ENCODE measurements at regions of chr11 and their contacts with region 1.

Region 1: GRCh38 chr11:5671841-5672240 is 13.0 kb downstream of the TRIM5 start:
- DNase-seq: no peak
- ATAC-seq: no peak
- H3K4me3 ChIP-seq: no peak overlapping the region
- H3K4me3 Mint-ChIP-seq: no peak overlapping the region
- H3K27ac ChIP-seq: no peak overlapping the region
- H3K27ac Mint-ChIP-seq: peak overlapping the region in 1 of 9 donors; percentile 76
- H3K4me1 ChIP-seq: no peaks in the 10 kb centered on the region
- H3K4me1 Mint-ChIP-seq: peaks cover 0 to 29% (median 18%) of the 10 kb centered on the region in 7 donors
- H3K27me3 ChIP-seq: no peaks in the 10 kb centered on the region
- H3K27me3 Mint-ChIP-seq: no peaks in the 10 kb centered on the region

Region 2: GRCh38 chr11:5712507-5712906 is 40.7 kb after region 1 on chr11:
- CTCF ChIA-PET with region 1: interaction called, 3 read pairs
- POLR2A ChIA-PET with region 1: no interaction called
- intact Hi-C with region 1: loop called in 1 of 2 experiments (anchors 5 kb)
- DNase-seq: peak in 3 of 9 donors; percentile 8 to 33 (median 22)
- ATAC-seq: peak; percentile 42
- H3K4me3 ChIP-seq: no peak overlapping the region
- H3K4me3 Mint-ChIP-seq: no peak overlapping the region
- H3K27ac ChIP-seq: no peak overlapping the region
- H3K27ac Mint-ChIP-seq: peak overlapping the region in 7 of 9 donors; percentile 6 to 83 (median 19)
- H3K4me1 ChIP-seq: no peaks in the 10 kb centered on the region
- H3K4me1 Mint-ChIP-seq: peaks cover 0 to 13% (median 4%) of the 10 kb centered on the region in 7 donors
- H3K27me3 ChIP-seq: no peaks in the 10 kb centered on the region
- H3K27me3 Mint-ChIP-seq: no peaks in the 10 kb centered on the region